CD4-positive, alpha-beta T cell (primary cell): ENCODE measurements at regions of chr11 and their contacts with region 1.

Region 1: GRCh38 chr11:111926505-111927391 is 8.0 kb downstream of the C11orf52 start:
- DNase-seq: peak; percentile 88 to 98 (median 96)
- ATAC-seq: peak; percentile 89
- H3K4me3 ChIP-seq: peak overlapping the region; percentile 80
- H3K4me3 Mint-ChIP-seq: peak overlapping the region; percentile 90
- H3K27ac ChIP-seq: peak overlapping the region; percentile 60 to 79
- H3K27ac Mint-ChIP-seq: peak overlapping the region; percentile 92
- H3K4me1 ChIP-seq: peaks cover 18% of the 10 kb centered on the region
- H3K4me1 Mint-ChIP-seq: peaks cover 20% of the 10 kb centered on the region
- H3K27me3 ChIP-seq: no peaks in the 10 kb centered on the region
- H3K27me3 Mint-ChIP-seq: no peaks in the 10 kb centered on the region
- CTCF ChIP-seq: no peak

Region 2: DNA sequence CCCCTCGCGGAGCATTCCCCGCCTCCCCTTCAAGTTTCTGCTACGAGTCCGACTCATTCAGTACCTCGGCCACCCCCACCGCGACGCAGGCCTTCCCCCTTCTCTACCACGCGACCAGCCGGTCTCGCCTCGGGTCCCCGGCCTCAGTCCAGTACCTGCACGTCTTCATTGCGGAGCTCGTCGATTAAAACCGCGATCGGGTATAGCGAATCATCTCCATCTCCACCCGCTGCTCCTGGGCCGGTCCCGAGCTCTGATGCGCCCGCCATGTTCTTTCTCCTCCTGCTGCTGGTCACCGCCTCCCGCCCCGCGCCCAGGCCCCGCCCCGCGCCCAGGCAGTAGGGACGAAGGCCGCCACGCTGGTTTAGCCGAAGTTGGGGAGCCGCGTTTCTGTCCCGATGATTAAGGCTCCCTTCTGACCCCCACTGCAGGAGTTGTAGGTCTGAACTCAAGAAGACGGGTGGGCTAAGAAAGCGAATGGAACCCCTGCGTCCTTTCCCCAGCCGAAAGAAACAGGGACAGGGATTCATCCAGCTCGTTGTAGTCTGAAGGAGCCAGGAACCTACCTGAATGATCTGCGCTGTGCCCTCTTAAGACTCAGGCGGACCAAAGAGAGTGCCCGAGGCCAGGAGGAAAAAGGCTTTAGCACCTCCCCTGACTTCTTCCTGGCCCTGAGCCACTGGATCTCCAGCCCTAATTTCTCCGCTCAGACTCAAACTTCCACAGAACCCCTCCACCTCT is 160.5 kb before region 1 on chr11 and contains the start of gene PPP2R1B:
- CTCF ChIA-PET with region 1: no interaction called
- POLR2A ChIA-PET with region 1: no interaction called
- intact Hi-C with region 1: loop called in 1 of 2 experiments (anchors 2 kb)
- DNase-seq: peak; percentile 52 to 85 (median 64)
- ATAC-seq: peak; percentile 97
- H3K4me3 ChIP-seq: peak within 1 kb of the TSS; percentile 85
- H3K4me3 Mint-ChIP-seq: peak within 1 kb of the TSS; percentile 99
- H3K27ac ChIP-seq: peak within 1 kb of the TSS; percentile 16 to 67
- H3K27ac Mint-ChIP-seq: peak within 1 kb of the TSS; percentile 70
- H3K4me1 ChIP-seq: peaks cover 12% of the 10 kb centered on the region
- H3K4me1 Mint-ChIP-seq: peaks cover 41% of the 10 kb centered on the region
- H3K27me3 ChIP-seq: no peaks in the 10 kb centered on the region
- H3K27me3 Mint-ChIP-seq: no peaks in the 10 kb centered on the region
- CTCF ChIP-seq: no peak
- total RNA-seq, gene PPP2R1B: 34.5 to 39.2 TPM

Region 3: DNA sequence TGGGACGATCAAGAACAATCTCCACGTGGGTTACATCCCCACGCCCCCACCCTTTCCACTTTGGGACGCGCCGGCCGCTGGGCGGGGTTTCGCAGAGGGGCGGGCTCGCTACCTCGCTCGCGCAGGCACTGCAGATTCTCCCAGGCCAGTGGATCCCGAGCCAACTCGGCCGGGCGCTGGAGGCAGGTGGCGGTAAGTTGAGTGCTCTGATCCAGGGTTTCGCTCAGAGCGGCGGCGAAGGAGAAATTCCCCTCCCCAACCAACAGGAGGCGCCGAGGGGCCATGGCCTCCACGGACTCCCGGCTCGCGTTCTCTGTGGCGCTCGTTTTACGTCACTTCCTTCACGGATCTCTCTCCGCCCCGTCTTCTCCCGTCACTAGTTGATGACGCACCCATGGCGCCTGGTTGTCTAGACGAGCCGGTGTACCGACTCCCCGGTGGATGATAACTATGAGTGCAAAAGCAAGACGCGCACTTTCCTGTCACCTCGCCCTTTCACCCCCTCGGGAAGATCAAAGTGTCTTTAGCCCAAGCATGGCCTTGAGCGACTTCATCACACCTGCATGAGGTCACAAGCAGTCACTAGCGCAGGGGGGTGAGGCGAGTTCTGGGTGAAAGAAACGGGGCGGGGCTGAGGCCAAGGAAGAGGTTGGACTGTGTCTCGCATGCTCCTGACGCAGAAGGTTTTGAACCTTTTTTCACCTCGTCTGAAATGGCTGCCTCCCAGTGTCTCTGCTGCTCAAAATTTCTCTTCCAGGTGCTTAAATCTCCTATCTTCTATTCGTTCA is 47.7 kb before region 1 on chr11 and contains the starts of genes CFAP68 and FDXACB1:
- CTCF ChIA-PET with region 1: interaction called, 6 read pairs
- POLR2A ChIA-PET with region 1: interaction called, 44 read pairs
- intact Hi-C with region 1: loop called (anchors 1 kb)
- DNase-seq: peak; percentile 89 to 99 (median 93)
- ATAC-seq: peak; percentile 88
- H3K4me3 ChIP-seq: peak within 1 kb of the TSS; percentile 76
- H3K4me3 Mint-ChIP-seq: peak within 1 kb of the TSS; percentile 92
- H3K27ac ChIP-seq: peak within 1 kb of the TSS; percentile 97 to 99
- H3K27ac Mint-ChIP-seq: peak within 1 kb of the TSS; percentile 94
- H3K4me1 ChIP-seq: peaks cover 14% of the 10 kb centered on the region
- H3K4me1 Mint-ChIP-seq: peaks cover 18% of the 10 kb centered on the region
- H3K27me3 ChIP-seq: no peaks in the 10 kb centered on the region
- H3K27me3 Mint-ChIP-seq: no peaks in the 10 kb centered on the region
- CTCF ChIP-seq: peak; percentile 98
- total RNA-seq, gene CFAP68: 18.7 to 21.0 TPM
- total RNA-seq, gene FDXACB1: 3.4 to 3.9 TPM

Region 4: DNA sequence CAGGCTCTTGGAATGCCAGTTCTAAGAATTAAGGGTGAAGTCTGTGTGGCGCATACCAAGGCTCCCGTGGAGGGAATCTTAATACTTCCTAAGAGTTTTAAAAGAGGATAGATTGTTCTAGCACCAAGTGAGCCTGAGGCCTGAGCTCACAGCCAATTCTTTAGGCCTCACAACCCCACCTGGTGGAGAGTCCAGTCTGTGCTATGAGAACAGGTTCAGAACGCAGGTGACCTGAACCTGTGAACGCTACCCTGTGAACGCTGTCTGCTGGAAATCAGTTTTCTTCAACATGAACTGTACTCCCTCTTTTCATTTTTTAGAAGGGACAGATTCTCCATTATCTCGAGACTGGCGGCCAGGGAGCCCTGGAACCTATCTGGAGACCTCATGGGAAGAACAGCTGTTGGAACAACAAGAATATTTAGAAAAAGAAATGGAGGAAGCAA is 55.3 kb after region 1 on chr11:
- CTCF ChIA-PET with region 1: interaction called, 12 read pairs
- POLR2A ChIA-PET with region 1: interaction called, 5 read pairs
- intact Hi-C with region 1: loop called in 1 of 2 experiments (anchors 1 kb)
- DNase-seq: peak; percentile 32 to 74 (median 50)
- ATAC-seq: peak; percentile 86
- H3K4me3 ChIP-seq: no peak overlapping the region
- H3K4me3 Mint-ChIP-seq: no peak overlapping the region
- H3K27ac ChIP-seq: no peak overlapping the region
- H3K27ac Mint-ChIP-seq: no peak overlapping the region
- H3K4me1 ChIP-seq: peaks cover 9% of the 10 kb centered on the region
- H3K4me1 Mint-ChIP-seq: peaks cover 10% of the 10 kb centered on the region
- H3K27me3 ChIP-seq: peaks cover 8 to 16% of the 10 kb centered on the region in 2 experiments
- H3K27me3 Mint-ChIP-seq: peaks cover 30% of the 10 kb centered on the region
- CTCF ChIP-seq: peak; percentile 56

Region 5: GRCh38 chr11:112074026-112074811 is 147.5 kb after region 1 on chr11 and contains the start of gene NKAPD1:
- CTCF ChIA-PET with region 1: interaction called, 3 read pairs
- POLR2A ChIA-PET with region 1: no interaction called
- intact Hi-C with region 1: loop called in 1 of 2 experiments (anchors 2 kb)
- DNase-seq: peak; percentile 65 to 92 (median 74)
- ATAC-seq: peak; percentile 87
- H3K4me3 ChIP-seq: peak within 1 kb of the TSS; percentile 80
- H3K4me3 Mint-ChIP-seq: peak within 1 kb of the TSS; percentile 97
- H3K27ac ChIP-seq: peak within 1 kb of the TSS; percentile 70 to 73
- H3K27ac Mint-ChIP-seq: peak within 1 kb of the TSS; percentile 78
- H3K4me1 ChIP-seq: peaks cover 13% of the 10 kb centered on the region
- H3K4me1 Mint-ChIP-seq: peaks cover 36% of the 10 kb centered on the region
- H3K27me3 ChIP-seq: no peaks in the 10 kb centered on the region
- H3K27me3 Mint-ChIP-seq: peaks cover 27% of the 10 kb centered on the region
- CTCF ChIP-seq: no peak
- total RNA-seq, gene NKAPD1: 14.8 to 16.0 TPM

Region 6: DNA sequence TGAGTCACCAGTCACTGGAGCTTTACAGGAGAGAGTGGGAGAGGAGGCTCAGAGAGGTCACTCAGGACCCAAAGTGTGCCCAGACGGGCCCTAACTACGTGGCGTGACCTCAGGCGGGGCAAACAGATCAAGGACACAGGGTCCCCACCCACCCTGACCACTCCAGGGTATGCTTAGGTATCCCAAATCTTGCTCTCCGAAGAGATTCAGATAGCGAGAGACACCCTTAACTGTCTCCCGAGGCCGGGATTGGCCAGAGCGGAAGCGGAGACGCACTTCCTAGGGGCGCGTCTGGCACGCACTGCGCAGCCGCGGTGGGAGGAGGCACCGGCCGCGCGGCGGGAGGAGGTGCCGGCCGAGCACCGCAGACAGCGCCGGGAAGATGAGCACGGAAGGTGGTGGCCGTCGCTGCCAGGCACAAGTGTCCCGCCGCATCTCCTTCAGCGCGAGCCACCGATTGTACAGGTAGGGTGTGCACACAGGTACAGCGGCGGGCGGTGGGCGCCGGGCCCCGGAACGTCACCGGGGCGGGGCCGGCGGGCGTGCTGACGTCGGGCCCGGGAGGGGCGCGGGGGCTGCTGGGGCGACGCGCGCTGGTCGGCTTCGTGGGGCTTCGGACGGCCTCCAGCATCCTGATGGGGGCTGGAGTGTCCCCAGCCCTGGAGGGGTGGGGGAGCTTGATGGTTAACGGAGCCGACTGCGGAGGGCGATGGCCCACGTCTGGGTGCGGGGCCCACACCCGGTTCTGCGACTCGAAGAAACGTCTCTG is 299.5 kb after region 1 on chr11 and contains the start of gene PTS:
- CTCF ChIA-PET with region 1: no interaction called
- POLR2A ChIA-PET with region 1: no interaction called
- intact Hi-C with region 1: loop called in 1 of 2 experiments (anchors 5 kb)
- DNase-seq: peak; percentile 68 to 93 (median 80)
- ATAC-seq: peak; percentile 89
- H3K4me3 ChIP-seq: peak within 1 kb of the TSS; percentile 69
- H3K4me3 Mint-ChIP-seq: peak within 1 kb of the TSS; percentile 96
- H3K27ac ChIP-seq: peak within 1 kb of the TSS; percentile 95 to 96
- H3K27ac Mint-ChIP-seq: peak within 1 kb of the TSS; percentile 99
- H3K4me1 ChIP-seq: peaks cover 17% of the 10 kb centered on the region
- H3K4me1 Mint-ChIP-seq: peaks cover 20% of the 10 kb centered on the region
- H3K27me3 ChIP-seq: no peaks in the 10 kb centered on the region
- H3K27me3 Mint-ChIP-seq: no peaks in the 10 kb centered on the region
- CTCF ChIP-seq: no peak
- total RNA-seq, gene PTS: 82.9 to 86.2 TPM

Region 7: GRCh38 chr11:113314389-113315301 is 1387.9 kb after region 1 on chr11 and contains the start of gene TTC12:
- CTCF ChIA-PET with region 1: no interaction called
- POLR2A ChIA-PET with region 1: interaction called, 6 read pairs
- intact Hi-C with region 1: loop called in 1 of 2 experiments (anchors 5 kb)
- DNase-seq: peak; percentile 86 to 95 (median 93)
- ATAC-seq: peak; percentile 98
- H3K4me3 ChIP-seq: peak within 1 kb of the TSS; percentile 60
- H3K4me3 Mint-ChIP-seq: peak within 1 kb of the TSS; percentile 93
- H3K27ac ChIP-seq: peak within 1 kb of the TSS; percentile 63 to 85
- H3K27ac Mint-ChIP-seq: peak within 1 kb of the TSS; percentile 88
- H3K4me1 ChIP-seq: peaks cover 30% of the 10 kb centered on the region
- H3K4me1 Mint-ChIP-seq: peaks cover 46% of the 10 kb centered on the region
- H3K27me3 ChIP-seq: no peaks in the 10 kb centered on the region
- H3K27me3 Mint-ChIP-seq: no peaks in the 10 kb centered on the region
- CTCF ChIP-seq: no peak
- total RNA-seq, gene TTC12: 26.5 to 34.5 TPM